Body of pancreas (tissue), 4 donors: ENCODE measurements at regions of chr1 and their contacts with region 1.

Region 1: DNA sequence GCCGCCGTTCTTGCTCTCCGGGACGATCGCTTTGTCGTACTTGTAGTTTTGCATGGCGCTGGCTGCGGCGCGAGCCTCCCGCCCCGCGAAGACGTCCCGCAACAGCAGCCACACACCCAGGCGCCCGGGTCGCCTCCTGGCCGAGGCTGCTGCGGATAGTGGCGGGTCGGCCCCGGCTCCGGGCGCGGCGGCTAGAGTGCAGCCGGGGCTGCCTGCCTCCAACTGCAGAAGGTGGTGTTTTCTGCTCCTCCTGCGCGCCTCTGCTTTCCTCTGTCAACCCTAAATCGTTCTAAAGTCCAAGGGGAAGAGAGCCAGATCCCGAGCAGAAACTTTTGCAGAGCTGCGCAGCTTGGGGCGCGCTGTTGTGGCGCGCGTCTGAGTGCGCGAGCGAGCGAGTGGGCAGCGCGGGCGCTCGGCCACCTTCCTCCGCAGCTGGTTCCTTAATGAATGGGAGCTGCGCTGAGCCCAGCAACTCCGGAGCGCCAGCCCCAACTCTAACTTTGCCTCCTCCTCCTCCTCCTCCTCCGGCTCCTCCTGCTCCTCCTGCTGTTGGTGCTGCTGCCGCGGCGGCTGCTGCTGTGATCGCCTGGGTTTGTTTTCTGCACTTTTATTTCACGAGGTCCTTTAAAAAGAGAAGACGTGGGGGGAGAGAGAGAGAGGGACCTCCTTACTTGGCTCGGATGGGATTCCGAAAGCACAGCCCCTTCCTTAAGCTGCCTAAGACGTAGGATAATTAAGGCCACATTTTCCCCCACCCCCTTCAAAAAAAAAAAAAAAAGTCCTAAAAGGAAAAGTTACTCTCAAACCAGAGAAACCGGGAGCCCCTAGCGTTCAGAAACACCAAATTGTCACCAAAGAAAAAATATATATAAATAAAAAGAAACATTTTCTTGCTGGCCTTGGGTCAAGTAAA is at the start of gene PLPP3:
- DNase-seq: peak; percentile 86 to 92 (median 90)
- ATAC-seq: peak; percentile 89
- H3K4me3 ChIP-seq: peak within 1 kb of the TSS; percentile 84 to 91
- H3K27ac ChIP-seq: peak within 1 kb of the TSS; percentile 83 to 95 (median 92)
- H3K4me1 ChIP-seq: peaks cover 42% of the 10 kb centered on the region
- H3K27me3 ChIP-seq: no peaks in the 10 kb centered on the region
- CTCF ChIP-seq: peak; percentile 26 to 89 (median 55)
- POLR2A ChIP-seq: peak; percentile 85 to 96 (median 96)
- total RNA-seq, gene PLPP3: 35.8 to 52.7 TPM

Region 2: GRCh38 chr1:56409094-56409691 is 170.0 kb before region 1 on chr1:
- intact Hi-C with region 1: loop called (anchors 10 kb)
- DNase-seq: peak; percentile 72 to 87 (median 76)
- ATAC-seq: peak; percentile 84
- H3K4me3 ChIP-seq: no peak overlapping the region
- H3K27ac ChIP-seq: no peak overlapping the region
- H3K4me1 ChIP-seq: peaks cover 25% of the 10 kb centered on the region
- H3K27me3 ChIP-seq: no peaks in the 10 kb centered on the region
- CTCF ChIP-seq: peak; percentile 40 to 80 (median 69)
- POLR2A ChIP-seq: no peak

Region 3: DNA sequence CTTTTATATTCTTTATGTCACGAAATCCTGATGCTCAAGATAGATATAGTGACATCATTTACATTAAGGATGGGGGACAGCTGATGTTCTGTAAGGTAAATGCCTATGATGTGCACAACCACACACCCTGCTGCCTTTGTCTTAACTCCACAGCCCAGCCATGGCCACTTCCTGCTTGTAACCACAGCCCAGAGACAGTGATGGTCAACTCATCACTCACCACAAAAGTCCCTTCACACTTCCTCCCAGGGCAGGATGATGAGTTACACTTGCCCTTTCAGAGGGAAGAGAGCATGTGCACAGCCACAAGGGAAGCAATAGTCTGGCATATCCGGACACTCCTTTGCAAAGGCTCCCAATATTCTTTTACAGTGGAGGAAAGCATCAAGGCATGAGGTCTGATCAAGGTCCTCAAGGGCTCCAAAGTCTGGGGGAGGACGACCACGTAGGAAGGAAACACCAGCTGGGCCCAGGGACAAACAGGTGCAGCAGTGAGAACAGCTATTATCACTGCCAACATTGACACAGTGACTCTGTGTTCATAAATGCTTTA is 53.7 kb before region 1 on chr1:
- intact Hi-C with region 1: loop called (anchors 10 kb)
- DNase-seq: peak in 1 of 4 donors; percentile 60
- ATAC-seq: no peak
- H3K4me3 ChIP-seq: no peak overlapping the region
- H3K27ac ChIP-seq: no peak overlapping the region
- H3K4me1 ChIP-seq: peaks cover 66% of the 10 kb centered on the region
- H3K27me3 ChIP-seq: no peaks in the 10 kb centered on the region
- CTCF ChIP-seq: no peak
- POLR2A ChIP-seq: no peak